Heart right ventricle (tissue), 16 donors: ENCODE measurements at regions of chr13 and their contacts with region 1.

Region 1: GRCh38 chr13:40508127-40508526 is 158.3 kb downstream of the FOXO1 start:
- DNase-seq: peak in 1 of 2 donors; percentile 48
- ATAC-seq: peak; percentile 68 to 89 (median 83)
- H3K4me3 ChIP-seq: peak overlapping the region in 1 of 10 donors; percentile 6
- H3K27ac ChIP-seq: peak overlapping the region in 9 of 10 donors; percentile 28 to 68 (median 53)
- H3K4me1 ChIP-seq: peaks cover 0 to 35% (median 25%) of the 10 kb centered on the region in 9 donors
- H3K27me3 ChIP-seq: no peaks in the 10 kb centered on the region
- CTCF ChIP-seq: no peak

Region 2: DNA sequence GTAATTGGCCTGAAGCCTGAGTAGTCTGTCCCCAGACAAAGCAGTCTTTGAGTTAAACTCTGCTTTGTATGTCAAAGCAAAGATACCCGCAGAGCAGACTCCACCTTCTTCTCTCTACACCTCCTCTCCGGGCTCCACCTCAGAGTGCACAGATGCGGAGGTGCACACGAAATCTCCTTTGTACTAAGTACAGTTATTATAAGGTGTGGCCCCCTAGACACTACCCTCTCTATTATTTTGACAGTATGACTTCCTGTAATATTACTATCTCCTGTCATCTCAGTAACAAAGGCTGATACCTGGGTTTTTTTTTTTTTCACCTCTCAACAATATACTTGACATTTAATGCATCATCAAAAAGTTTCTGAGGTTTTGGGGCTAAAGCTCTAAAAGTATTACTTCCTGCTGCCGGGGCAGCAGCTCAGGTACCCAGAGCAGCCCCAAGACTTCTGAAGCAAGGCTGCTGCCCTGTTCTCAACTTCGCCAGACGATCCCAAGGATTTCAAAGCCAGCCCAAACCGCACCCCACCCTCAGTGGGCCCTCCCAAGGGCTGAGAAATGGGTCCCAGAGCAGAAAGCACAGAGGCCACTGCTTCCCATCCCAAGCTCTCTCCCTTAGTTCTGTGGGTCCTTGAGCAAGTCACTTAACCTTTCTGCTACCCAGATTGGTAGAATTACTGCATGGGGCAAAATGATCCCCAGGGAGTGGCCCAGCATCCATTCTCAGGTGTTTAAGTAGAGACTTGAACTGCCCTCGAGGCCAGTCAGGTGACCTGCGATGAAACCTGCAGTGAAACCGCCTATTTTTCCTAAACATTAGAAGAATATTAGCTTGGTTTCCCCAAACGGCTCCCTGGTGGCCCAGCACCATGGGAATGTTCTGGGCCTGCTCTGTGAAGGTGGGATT is 22.3 kb before region 1 on chr13:
- intact Hi-C with region 1: loop called in 1 of 10 experiments (anchors 2 kb)
- DNase-seq: no peak
- ATAC-seq: peak in 1 of 8 donors; percentile 13
- H3K4me3 ChIP-seq: no peak overlapping the region
- H3K27ac ChIP-seq: peak overlapping the region in 1 of 10 donors; percentile 72
- H3K4me1 ChIP-seq: peaks cover 0 to 18% (median 6%) of the 10 kb centered on the region in 9 donors
- H3K27me3 ChIP-seq: no peaks in the 10 kb centered on the region
- CTCF ChIP-seq: no peak

Region 3: DNA sequence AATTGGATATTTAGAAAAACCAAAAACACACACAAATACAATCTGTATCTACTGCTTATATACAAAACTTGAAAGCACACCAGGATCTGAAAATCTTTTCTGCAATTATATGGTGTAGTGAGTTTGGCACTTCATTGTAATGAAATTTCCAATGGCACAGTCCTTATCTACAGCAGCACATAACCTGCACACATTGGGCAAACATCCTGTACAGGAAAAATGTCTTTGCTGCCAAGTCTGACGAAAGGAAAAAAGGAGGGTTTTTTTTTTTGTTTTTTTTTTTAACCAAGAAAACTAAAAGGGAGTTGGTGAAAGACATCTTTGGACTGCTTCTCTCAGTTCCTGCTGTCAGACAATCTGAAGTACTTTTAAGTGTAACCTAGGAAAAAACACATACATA is 50.5 kb after region 1 on chr13:
- intact Hi-C with region 1: loop called in 1 of 10 experiments (anchors 5 kb)
- DNase-seq: no peak
- ATAC-seq: peak in 5 of 8 donors; percentile 42 to 68 (median 54)
- H3K4me3 ChIP-seq: no peak overlapping the region
- H3K27ac ChIP-seq: peak overlapping the region in 3 of 10 donors; percentile 15 to 52 (median 42)
- H3K4me1 ChIP-seq: peaks cover 4 to 86% (median 62%) of the 10 kb centered on the region in 9 donors
- H3K27me3 ChIP-seq: no peaks in the 10 kb centered on the region
- CTCF ChIP-seq: no peak

Region 4: DNA sequence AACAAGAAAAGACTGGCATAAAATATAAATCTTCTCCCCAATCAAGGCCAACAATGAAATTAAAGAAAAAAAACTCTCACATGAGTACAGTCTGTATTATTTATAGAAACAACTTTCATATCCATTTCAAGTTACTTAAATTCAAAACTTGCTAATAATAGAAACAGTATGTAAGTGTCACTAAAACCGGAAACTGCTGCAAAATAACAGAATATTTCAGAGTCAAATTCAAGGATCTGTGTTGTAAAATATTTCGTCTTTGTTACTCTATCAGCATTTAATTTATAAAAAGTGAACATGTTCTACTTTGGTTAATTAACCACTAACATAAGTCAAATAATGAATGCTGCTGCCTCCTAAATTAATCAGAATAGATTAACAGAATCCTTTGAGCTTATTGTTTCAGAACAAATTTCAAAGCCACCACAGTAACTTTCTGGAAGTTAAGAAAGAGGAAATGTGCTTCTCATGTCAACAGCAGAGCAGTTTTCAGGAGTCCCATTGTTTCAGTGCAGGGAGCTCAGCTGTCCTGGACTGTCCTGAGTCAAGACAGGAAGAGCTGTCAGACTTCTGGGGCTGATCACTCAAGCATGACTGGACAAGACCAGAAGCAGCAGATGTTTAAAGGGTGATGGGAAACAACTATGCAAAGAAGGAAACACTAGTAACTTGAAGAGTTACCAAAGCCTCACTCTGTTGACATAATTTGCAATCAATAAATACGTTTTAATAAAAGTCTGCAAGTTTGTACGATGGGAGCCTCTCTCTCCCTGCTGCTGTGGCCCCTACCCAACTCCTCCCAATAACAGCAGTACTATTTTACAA is 81.4 kb after region 1 on chr13:
- intact Hi-C with region 1: loop called in 1 of 10 experiments (anchors 5 kb)
- DNase-seq: peak in 1 of 2 donors; percentile 70
- ATAC-seq: peak; percentile 80 to 92 (median 86)
- H3K4me3 ChIP-seq: peak overlapping the region in 1 of 10 donors; percentile 7
- H3K27ac ChIP-seq: peak overlapping the region; percentile 55 to 91 (median 68)
- H3K4me1 ChIP-seq: peaks cover 17 to 96% (median 75%) of the 10 kb centered on the region in 9 donors
- H3K27me3 ChIP-seq: no peaks in the 10 kb centered on the region
- CTCF ChIP-seq: no peak